Panc1 (cell line): ENCODE measurements at regions of chr17 and their contacts with region 1.

Region 1: GRCh38 chr17:74361230-74362068 is at the start of gene BTBD17:
- DNase-seq: no peak
- ATAC-seq: peak; percentile 85
- H3K4me3 ChIP-seq: no peak within 1 kb of the TSS
- H3K27ac ChIP-seq: no peak within 1 kb of the TSS
- H3K4me1 ChIP-seq: no peaks in the 10 kb centered on the region
- H3K27me3 ChIP-seq: no peaks in the 10 kb centered on the region; the same call in 1 of the 2 replicates
- CTCF ChIP-seq: peak; percentile 94
- total RNA-seq, gene BTBD17: not detected

Region 2: GRCh38 chr17:73976676-73977521 is 384.6 kb before region 1 on chr17:
- CTCF ChIA-PET with region 1: no interaction called
- POLR2A ChIA-PET with region 1: no interaction called
- in situ Hi-C with region 1: no loop called
- intact Hi-C with region 1: no loop called
- DNase-seq: no peak
- ATAC-seq: no peak
- H3K4me3 ChIP-seq: no peak overlapping the region
- H3K27ac ChIP-seq: no peak overlapping the region
- H3K4me1 ChIP-seq: no peaks in the 10 kb centered on the region
- H3K27me3 ChIP-seq: peaks cover 1% of the 10 kb centered on the region; the same call in 1 of the 2 replicates
- CTCF ChIP-seq: no peak

Region 3: DNA sequence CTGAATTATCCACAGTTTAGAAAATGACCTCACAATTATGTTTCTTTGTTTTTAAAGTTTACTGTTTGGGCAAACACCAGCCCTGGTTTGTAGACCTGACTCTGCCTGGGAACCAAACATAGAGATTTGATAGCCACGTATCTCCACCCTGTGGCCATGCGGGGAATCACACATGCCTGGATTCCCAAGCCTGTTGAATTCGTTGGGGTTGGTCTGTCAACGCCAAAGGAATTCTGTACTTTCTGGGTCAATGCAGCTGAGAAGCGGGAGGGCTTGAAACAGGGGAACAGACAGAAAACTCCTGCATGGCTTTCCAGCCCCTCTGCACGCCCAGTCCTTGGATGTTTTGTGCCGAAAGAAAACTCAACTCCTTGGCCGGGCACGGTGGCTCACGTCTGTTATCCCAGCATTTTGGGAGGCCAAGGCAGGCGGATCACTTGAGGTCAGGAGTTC is 132.0 kb after region 1 on chr17:
- CTCF ChIA-PET with region 1: interaction called, 12 read pairs
- POLR2A ChIA-PET with region 1: no interaction called
- in situ Hi-C with region 1: no loop called
- intact Hi-C with region 1: no loop called
- DNase-seq: peak; percentile 60
- ATAC-seq: peak; percentile 96
- H3K4me3 ChIP-seq: no peak overlapping the region
- H3K27ac ChIP-seq: no peak overlapping the region
- H3K4me1 ChIP-seq: no peaks in the 10 kb centered on the region
- H3K27me3 ChIP-seq: no peaks in the 10 kb centered on the region
- CTCF ChIP-seq: peak; percentile 93

Region 4: GRCh38 chr17:75105618-75106384 is 744.4 kb after region 1 on chr17:
- CTCF ChIA-PET with region 1: no interaction called
- POLR2A ChIA-PET with region 1: no interaction called
- in situ Hi-C with region 1: no loop called
- intact Hi-C with region 1: no loop called
- DNase-seq: no peak
- ATAC-seq: peak; percentile 80
- H3K4me3 ChIP-seq: no peak overlapping the region
- H3K27ac ChIP-seq: peak overlapping the region; percentile 61
- H3K4me1 ChIP-seq: peaks cover 32% of the 10 kb centered on the region
- H3K27me3 ChIP-seq: no peaks in the 10 kb centered on the region
- CTCF ChIP-seq: peak; percentile 91